Activated T-helper 1 cell treated with anti-CD3 and anti-CD28 coated beads, Interleukin-12 subunit alpha, Interleukin-12 subunit beta, Interleukin-2, Interleukin-4 antibody, amounts not matched to agents 30 ng/mL and 10 ng/mL and 1 ng/mL, durations not matched to agents 14 hours and 24 hours and 36 hours (primary cell): ENCODE measurements at regions of chr11 and their contacts with region 1.

Region 1: DNA sequence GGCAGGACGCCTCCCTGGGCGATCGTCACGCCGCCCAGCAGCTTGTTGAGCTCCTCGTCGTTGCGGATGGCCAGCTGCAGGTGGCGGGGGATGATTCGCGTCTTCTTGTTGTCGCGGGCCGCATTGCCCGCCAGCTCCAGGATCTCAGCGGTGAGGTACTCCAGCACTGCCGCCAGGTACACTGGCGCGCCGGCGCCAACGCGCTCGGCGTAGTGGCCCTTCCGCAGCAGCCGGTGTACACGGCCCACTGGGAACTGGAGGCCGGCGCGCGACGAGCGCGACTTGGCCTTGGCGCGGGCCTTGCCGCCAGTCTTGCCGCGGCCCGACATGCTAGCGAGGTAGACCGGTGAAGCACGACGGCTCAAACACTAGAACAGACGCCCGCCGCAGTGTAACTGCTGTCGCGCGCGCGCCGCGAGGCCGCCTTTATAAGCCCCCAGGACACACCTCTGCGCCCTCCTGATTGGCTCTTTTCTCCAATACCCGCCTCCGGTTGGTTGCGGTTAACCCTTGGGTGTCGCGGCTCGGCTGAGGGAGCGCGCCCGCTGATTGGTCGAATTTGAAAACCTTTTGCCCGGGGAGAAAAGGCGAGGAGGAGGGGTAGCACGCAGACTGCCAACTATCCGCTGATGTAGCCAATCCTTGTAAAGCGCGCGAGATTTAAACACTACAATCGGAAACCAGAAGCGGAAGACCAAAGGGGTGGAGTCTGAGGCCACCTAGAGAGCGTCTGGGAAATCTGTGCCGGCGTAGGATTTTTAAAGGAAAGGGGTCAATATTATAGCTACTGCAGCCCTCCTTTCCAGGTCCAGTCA is 6.4 kb downstream of the DPAGT1 start:
- DNase-seq: peak; percentile 100
- H3K4me3 Mint-ChIP-seq: peak overlapping the region; percentile 95
- H3K27ac Mint-ChIP-seq: peak overlapping the region; percentile 91
- H3K4me1 Mint-ChIP-seq: peaks cover 59% of the 10 kb centered on the region
- H3K27me3 Mint-ChIP-seq: peaks cover 4% of the 10 kb centered on the region

Region 2: GRCh38 chr11:118997627-118998387 is 97.5 kb before region 1 on chr11 and contains the start of gene CENATAC:
- intact Hi-C with region 1: loop called (anchors 2 kb)
- DNase-seq: peak; percentile 96
- H3K4me3 Mint-ChIP-seq: peak within 1 kb of the TSS; percentile 96
- H3K27ac Mint-ChIP-seq: peak within 1 kb of the TSS; percentile 97
- H3K4me1 Mint-ChIP-seq: peaks cover 27% of the 10 kb centered on the region
- H3K27me3 Mint-ChIP-seq: no peaks in the 10 kb centered on the region
- total RNA-seq, gene CENATAC: 50.1 and 53.6 TPM in 2 replicates

Region 3: GRCh38 chr11:119030329-119031049 is 64.8 kb before region 1 on chr11 and contains the start of gene SLC37A4:
- intact Hi-C with region 1: loop called (anchors 2 kb)
- DNase-seq: peak; percentile 99
- H3K4me3 Mint-ChIP-seq: peak within 1 kb of the TSS; percentile 80
- H3K27ac Mint-ChIP-seq: peak within 1 kb of the TSS; percentile 86
- H3K4me1 Mint-ChIP-seq: peaks cover 15% of the 10 kb centered on the region
- H3K27me3 Mint-ChIP-seq: no peaks in the 10 kb centered on the region
- total RNA-seq, gene SLC37A4: 24.3 and 28.7 TPM in 2 replicates

Region 4: GRCh38 chr11:119084663-119085436 is 10.4 kb before region 1 on chr11 and contains the start of gene HMBS:
- intact Hi-C with region 1: loop called (anchors 1 kb)
- DNase-seq: peak; percentile 89
- H3K4me3 Mint-ChIP-seq: peak within 1 kb of the TSS; percentile 97
- H3K27ac Mint-ChIP-seq: peak within 1 kb of the TSS; percentile 92
- H3K4me1 Mint-ChIP-seq: peaks cover 39% of the 10 kb centered on the region
- H3K27me3 Mint-ChIP-seq: no peaks in the 10 kb centered on the region
- total RNA-seq, gene HMBS: 55.0 and 55.6 TPM in 2 replicates

Region 5: GRCh38 chr11:119196833-119197483 is 101.7 kb after region 1 on chr11:
- intact Hi-C with region 1: loop called (anchors 2 kb)
- DNase-seq: peak; percentile 60
- H3K4me3 Mint-ChIP-seq: no peak overlapping the region
- H3K27ac Mint-ChIP-seq: no peak overlapping the region
- H3K4me1 Mint-ChIP-seq: peaks cover 9% of the 10 kb centered on the region
- H3K27me3 Mint-ChIP-seq: peaks cover 3% of the 10 kb centered on the region

Region 6: GRCh38 chr11:119533921-119534736 is 438.9 kb after region 1 on chr11:
- intact Hi-C with region 1: no loop called
- DNase-seq: peak; percentile 19
- H3K4me3 Mint-ChIP-seq: no peak overlapping the region
- H3K27ac Mint-ChIP-seq: no peak overlapping the region
- H3K4me1 Mint-ChIP-seq: no peaks in the 10 kb centered on the region
- H3K27me3 Mint-ChIP-seq: peaks cover 9% of the 10 kb centered on the region